Psoas muscle (tissue), 8 donors: ENCODE measurements at regions of chr9 and their contacts with region 1.

Region 1: GRCh38 chr9:23587433-23587832 is 238.6 kb downstream of the ELAVL2 start:
- DNase-seq: peak; percentile 65 to 86
- ATAC-seq: peak; percentile 75 to 95 (median 88)
- H3K4me3 ChIP-seq: no peak overlapping the region
- H3K27ac ChIP-seq: peak overlapping the region; percentile 68
- H3K4me1 ChIP-seq: peaks cover 28% of the 10 kb centered on the region
- H3K27me3 ChIP-seq: no peaks in the 10 kb centered on the region
- CTCF ChIP-seq: no peak

Region 2: GRCh38 chr9:23826120-23826629 is 238.7 kb after region 1 on chr9 and contains the start of gene ELAVL2:
- intact Hi-C with region 1: loop called in 1 of 2 experiments (anchors 10 kb)
- DNase-seq: peak; percentile 84 to 91
- ATAC-seq: peak; percentile 93 to 98 (median 96)
- H3K4me3 ChIP-seq: peak within 1 kb of the TSS; percentile 65
- H3K27ac ChIP-seq: no peak within 1 kb of the TSS
- H3K4me1 ChIP-seq: no peaks in the 10 kb centered on the region
- H3K27me3 ChIP-seq: peaks cover 3 to 94% (median 34%) of the 10 kb centered on the region in 3 donors
- CTCF ChIP-seq: no peak
- total RNA-seq, gene ELAVL2: 0.32 TPM in 1 of 4 donors, not detected in the others